ENCODE measurements at regions of chr9 and their contacts with region 1.

Region 1: GRCh38 chr9:33290247-33291030 is at the start of gene NFX1:
- DNase-seq: peak; percentile 99
- ATAC-seq: peak; percentile 87
- H3K4me3 Mint-ChIP-seq: peak within 1 kb of the TSS; percentile 84
- H3K27ac Mint-ChIP-seq: peak within 1 kb of the TSS; percentile 99
- H3K4me1 Mint-ChIP-seq: peaks cover 51% of the 10 kb centered on the region
- H3K27me3 Mint-ChIP-seq: no peaks in the 10 kb centered on the region
- CTCF ChIP-seq: no peak
- total RNA-seq, gene NFX1: 37.4 to 38.9 TPM

Region 2: DNA sequence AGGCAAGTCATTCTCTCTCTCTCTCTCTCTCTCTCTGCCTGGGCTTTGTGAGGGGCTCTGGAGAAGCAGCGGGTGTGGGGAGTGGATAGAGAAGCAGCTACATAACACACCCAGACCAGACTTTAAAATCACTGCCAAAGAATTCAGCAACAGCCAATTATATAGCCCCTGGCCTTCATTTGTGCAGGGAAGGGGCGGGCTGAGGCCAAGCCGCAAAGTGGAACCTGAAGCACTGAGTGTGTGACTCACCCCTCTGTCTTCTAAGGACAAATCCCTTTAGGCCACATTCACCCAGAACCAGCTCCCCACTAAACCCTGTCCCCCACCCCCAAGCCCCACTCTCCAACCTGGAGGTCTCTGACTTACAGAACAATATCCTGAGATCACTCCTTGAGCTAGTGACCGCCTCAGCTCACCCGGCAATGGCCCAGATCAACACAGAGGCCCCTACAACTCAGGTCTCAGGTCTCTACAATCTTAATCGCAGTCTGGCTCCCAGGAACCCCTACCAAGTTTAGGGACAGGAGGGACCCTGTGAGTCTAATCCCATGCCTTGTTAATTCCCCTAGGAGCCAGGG is 129.3 kb before region 1 on chr9:
- CTCF ChIA-PET with region 1: no interaction called
- POLR2A ChIA-PET with region 1: no interaction called
- intact Hi-C with region 1: no loop called
- DNase-seq: peak; percentile 78
- ATAC-seq: peak; percentile 41
- H3K4me3 Mint-ChIP-seq: peak overlapping the region; percentile 54
- H3K27ac Mint-ChIP-seq: peak overlapping the region; percentile 90
- H3K4me1 Mint-ChIP-seq: peaks cover 87% of the 10 kb centered on the region
- H3K27me3 Mint-ChIP-seq: no peaks in the 10 kb centered on the region
- CTCF ChIP-seq: no peak

Region 3: DNA sequence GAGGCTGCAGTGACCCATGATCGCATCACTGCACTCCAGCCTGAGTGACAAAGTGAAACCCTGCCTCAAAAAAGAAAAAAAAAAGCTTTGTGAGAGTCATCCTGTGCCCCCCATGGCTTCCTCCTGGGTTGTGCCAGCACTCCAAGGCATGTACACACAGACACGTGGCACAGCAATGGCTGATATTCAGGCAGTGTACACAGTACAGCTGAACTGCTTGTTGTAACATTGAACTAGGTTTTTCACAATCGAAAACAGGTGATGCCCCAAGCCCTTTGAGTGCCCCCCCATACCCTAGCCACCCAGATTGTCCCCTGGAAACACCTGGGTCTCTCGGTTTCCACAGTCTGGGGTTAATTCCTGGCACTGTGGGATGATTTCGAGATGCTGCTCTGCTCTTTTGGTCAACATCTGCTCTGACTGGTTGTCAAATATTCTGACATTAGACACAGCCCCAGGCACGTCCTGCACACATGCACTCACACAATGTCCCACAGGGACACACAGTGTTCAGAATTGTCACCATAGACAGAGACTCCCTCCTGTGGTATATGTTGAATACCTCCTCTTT is 41.3 kb before region 1 on chr9:
- CTCF ChIA-PET with region 1: no interaction called
- POLR2A ChIA-PET with region 1: no interaction called
- intact Hi-C with region 1: no loop called
- DNase-seq: no peak
- ATAC-seq: no peak
- H3K4me3 Mint-ChIP-seq: no peak overlapping the region
- H3K27ac Mint-ChIP-seq: no peak overlapping the region
- H3K4me1 Mint-ChIP-seq: no peaks in the 10 kb centered on the region
- H3K27me3 Mint-ChIP-seq: no peaks in the 10 kb centered on the region
- CTCF ChIP-seq: no peak

Region 4: GRCh38 chr9:33264473-33265177 is 25.8 kb before region 1 on chr9 and contains the starts of genes BAG1 and CHMP5:
- CTCF ChIA-PET with region 1: interaction called, 7 read pairs
- POLR2A ChIA-PET with region 1: interaction called, 20 read pairs
- intact Hi-C with region 1: loop called (anchors 2 kb)
- DNase-seq: peak; percentile 100
- ATAC-seq: peak; percentile 98
- H3K4me3 Mint-ChIP-seq: peak within 1 kb of the TSS; percentile 99
- H3K27ac Mint-ChIP-seq: peak within 1 kb of the TSS; percentile 96
- H3K4me1 Mint-ChIP-seq: peaks cover 41% of the 10 kb centered on the region
- H3K27me3 Mint-ChIP-seq: no peaks in the 10 kb centered on the region
- CTCF ChIP-seq: no peak
- total RNA-seq, gene BAG1: 55.6 to 61.6 TPM
- total RNA-seq, gene CHMP5: 64.6 to 74.2 TPM

Region 5: GRCh38 chr9:33277484-33277883 is 13.0 kb before region 1 on chr9:
- CTCF ChIA-PET with region 1: interaction called, 14 read pairs
- POLR2A ChIA-PET with region 1: no interaction called
- intact Hi-C with region 1: no loop called
- DNase-seq: no peak
- ATAC-seq: peak; percentile 53
- H3K4me3 Mint-ChIP-seq: no peak overlapping the region
- H3K27ac Mint-ChIP-seq: no peak overlapping the region
- H3K4me1 Mint-ChIP-seq: peaks cover 11% of the 10 kb centered on the region
- H3K27me3 Mint-ChIP-seq: no peaks in the 10 kb centered on the region
- CTCF ChIP-seq: no peak

Region 6: DNA sequence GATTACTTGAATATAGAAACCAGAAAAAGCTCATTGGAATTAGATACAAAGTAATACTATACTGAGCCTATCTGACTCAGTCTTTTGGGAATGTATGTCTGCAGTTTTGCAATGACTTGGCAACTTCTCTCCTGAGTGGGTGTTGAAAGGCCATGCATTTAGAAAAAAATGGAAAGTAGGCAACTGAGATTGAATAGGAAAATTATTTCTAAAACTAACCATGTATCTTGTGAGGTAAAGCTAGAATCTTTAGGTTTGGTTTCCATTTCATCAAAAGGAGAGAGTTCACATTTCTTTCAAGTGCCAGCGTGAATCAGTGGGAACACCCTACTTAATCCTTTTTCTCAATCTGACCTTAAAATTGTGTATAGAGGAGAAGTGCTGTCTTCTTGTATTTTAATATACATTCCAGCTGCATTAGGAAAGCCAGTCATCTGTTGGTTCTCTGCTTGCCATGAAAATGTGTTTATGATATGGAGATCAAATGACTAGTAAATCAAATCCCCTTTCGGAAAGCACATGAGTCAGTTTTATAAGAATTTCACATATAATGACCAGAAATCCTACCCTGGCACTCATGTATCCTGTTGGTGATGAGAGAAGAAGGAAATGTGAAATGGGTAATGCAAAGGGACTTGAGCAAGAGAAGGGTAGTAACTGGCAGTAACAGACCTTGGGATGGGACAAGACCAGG is 30.3 kb after region 1 on chr9:
- CTCF ChIA-PET with region 1: interaction called, 10 read pairs
- POLR2A ChIA-PET with region 1: interaction called, 5 read pairs
- intact Hi-C with region 1: no loop called
- DNase-seq: no peak
- ATAC-seq: no peak
- H3K4me3 Mint-ChIP-seq: no peak overlapping the region
- H3K27ac Mint-ChIP-seq: peak overlapping the region; percentile 77
- H3K4me1 Mint-ChIP-seq: peaks cover 12% of the 10 kb centered on the region
- H3K27me3 Mint-ChIP-seq: no peaks in the 10 kb centered on the region
- CTCF ChIP-seq: no peak